A549 (cell line): ENCODE measurements at regions of chr15 and their contacts with region 1.

Region 1: DNA sequence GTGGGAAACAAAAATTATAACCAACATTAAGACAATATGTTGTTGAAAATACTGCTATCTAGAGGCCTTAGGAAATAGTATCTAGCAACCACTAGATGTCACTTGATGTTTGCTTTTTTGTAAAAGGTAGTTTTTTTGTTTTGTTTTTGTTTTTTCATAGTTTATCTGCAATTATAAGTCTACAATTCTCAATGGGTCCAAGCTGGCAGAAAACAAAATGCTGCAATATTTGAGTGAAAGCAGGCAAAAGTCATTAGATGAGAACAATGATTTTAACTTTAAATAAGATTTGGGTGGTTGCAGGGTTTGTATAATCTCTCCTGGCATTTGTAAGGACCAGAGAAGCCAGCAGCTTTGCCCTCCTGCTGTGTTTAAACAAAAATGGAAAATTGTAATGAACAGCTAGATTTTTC is 27.0 kb downstream of the DUT start:
- DNase-seq: peak in 1 of 2 experiments; percentile 24
- ATAC-seq: peak in 1 of 2 experiments; percentile 69; a peak in 3 of 6 replicates
- H3K4me3 ChIP-seq: no peak overlapping the region
- H3K27ac ChIP-seq: no peak overlapping the region
- H3K4me1 ChIP-seq: peaks cover 22% of the 10 kb centered on the region; the same call in 2 of the 3 replicates
- CTCF ChIP-seq: peak; percentile 63
- EP300 ChIP-seq: no peak
- POLR2A ChIP-seq: no peak
- RAD21 ChIP-seq: peak; percentile 71 to 81

Region 2: DNA sequence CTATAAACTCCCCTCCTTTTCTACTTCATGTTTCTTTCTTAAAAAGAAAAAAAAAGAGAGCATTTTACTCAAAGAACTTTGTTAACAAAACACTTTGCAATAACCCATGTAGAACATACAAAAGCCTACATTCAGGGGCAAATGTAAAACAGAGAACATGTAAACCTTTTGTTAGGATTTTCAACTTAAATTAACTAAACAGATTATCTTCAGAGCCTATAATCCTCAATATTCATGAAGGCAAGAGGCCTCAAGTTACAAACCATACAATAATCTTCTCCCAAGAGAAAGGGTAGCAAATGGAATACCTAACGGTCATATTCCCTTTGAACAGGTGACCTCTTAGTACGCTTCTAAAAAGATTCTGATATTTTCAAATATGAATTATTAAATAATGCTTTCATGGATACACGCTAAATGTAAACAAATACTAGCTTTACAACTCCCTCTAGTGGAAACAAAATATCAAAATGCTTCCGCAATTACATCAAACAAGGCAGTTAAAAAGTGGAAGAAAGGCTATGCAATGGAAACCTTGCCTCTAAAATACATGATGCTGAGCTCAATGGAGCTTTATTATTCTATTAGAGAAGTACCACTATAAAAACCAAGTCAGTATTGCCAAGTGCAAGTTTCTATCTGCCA is 442.7 kb after region 1 on chr15:
- CTCF ChIA-PET with region 1: interaction called, 13 read pairs
- POLR2A ChIA-PET with region 1: no interaction called
- DNase-seq: peak; percentile 3 to 18
- ATAC-seq: 0 out of 6 replicates have a peak, but pooled peaks of 1 of the 2 experiments have one; percentile 30
- H3K4me3 ChIP-seq: no peak overlapping the region
- H3K27ac ChIP-seq: no peak overlapping the region
- H3K4me1 ChIP-seq: peaks cover 19% of the 10 kb centered on the region; the same call in 2 of the 3 replicates
- CTCF ChIP-seq: peak; percentile 48
- EP300 ChIP-seq: no peak
- POLR2A ChIP-seq: no peak
- RAD21 ChIP-seq: peak; percentile 45 to 47; a peak in 4 of 5 replicates

Region 3: GRCh38 chr15:48855501-48856440 is 497.5 kb after region 1 on chr15:
- CTCF ChIA-PET with region 1: interaction called, 30 read pairs
- POLR2A ChIA-PET with region 1: no interaction called
- DNase-seq: peak; percentile 15 to 26
- ATAC-seq: peak; percentile 90
- H3K4me3 ChIP-seq: no peak overlapping the region
- H3K27ac ChIP-seq: no peak overlapping the region
- H3K4me1 ChIP-seq: peaks cover 4% of the 10 kb centered on the region; the same call in 1 of the 3 replicates
- CTCF ChIP-seq: peak; percentile 51
- EP300 ChIP-seq: no peak
- POLR2A ChIP-seq: no peak
- RAD21 ChIP-seq: peak; percentile 51 to 58; a peak in 4 of 5 replicates